ENCODE measurements at regions of chr11 and their contacts with region 1.

Region 1: DNA sequence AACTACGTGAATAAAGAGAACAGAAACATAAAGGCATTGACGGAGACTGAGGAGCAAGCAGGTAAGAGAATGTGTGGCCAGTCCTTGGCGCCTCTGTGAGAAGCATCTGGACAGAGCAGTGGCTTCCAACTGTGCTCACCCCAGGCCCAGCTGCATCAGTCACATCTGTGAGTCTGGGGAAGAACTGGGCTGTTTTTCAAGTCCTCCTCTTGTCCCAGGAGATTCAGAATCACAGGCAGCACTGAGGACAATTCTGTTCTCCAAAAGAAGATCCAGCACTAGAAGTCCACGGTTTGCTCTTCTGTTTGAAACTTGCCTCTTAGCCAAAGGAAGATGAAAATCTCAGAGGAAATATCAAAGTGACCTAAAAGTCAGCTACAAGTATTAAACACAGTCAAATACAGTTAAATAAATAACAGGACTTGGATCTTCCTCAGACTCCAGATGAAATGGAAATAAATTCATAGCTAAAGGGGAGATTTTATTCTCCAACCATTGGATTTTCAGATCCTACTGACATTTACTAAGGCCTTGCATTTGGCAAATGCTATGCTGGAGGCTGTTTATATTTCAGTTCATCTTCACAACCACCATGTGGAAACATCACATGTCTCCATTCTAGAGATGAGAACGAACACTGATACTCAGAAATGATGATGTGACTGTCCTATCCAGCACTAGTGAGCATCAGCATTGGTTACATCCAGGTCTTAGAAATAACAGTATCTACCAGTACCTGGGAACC is 14.1 kb downstream of the FAM181B start:
- DNase-seq: no peak
- ATAC-seq: no peak
- H3K4me3 ChIP-seq: no peak overlapping the region
- H3K27ac ChIP-seq: no peak overlapping the region
- H3K4me1 ChIP-seq: no peaks in the 10 kb centered on the region
- H3K27me3 ChIP-seq: no peaks in the 10 kb centered on the region
- CTCF ChIP-seq: no peak

Region 2: GRCh38 chr11:82601711-82602110 is 117.8 kb before region 1 on chr11:
- intact Hi-C with region 1: no loop called
- DNase-seq: no peak
- ATAC-seq: no peak
- H3K4me3 ChIP-seq: no peak overlapping the region
- H3K27ac ChIP-seq: no peak overlapping the region
- H3K4me1 ChIP-seq: no peaks in the 10 kb centered on the region
- H3K27me3 ChIP-seq: no peaks in the 10 kb centered on the region
- CTCF ChIP-seq: no peak

Region 3: DNA sequence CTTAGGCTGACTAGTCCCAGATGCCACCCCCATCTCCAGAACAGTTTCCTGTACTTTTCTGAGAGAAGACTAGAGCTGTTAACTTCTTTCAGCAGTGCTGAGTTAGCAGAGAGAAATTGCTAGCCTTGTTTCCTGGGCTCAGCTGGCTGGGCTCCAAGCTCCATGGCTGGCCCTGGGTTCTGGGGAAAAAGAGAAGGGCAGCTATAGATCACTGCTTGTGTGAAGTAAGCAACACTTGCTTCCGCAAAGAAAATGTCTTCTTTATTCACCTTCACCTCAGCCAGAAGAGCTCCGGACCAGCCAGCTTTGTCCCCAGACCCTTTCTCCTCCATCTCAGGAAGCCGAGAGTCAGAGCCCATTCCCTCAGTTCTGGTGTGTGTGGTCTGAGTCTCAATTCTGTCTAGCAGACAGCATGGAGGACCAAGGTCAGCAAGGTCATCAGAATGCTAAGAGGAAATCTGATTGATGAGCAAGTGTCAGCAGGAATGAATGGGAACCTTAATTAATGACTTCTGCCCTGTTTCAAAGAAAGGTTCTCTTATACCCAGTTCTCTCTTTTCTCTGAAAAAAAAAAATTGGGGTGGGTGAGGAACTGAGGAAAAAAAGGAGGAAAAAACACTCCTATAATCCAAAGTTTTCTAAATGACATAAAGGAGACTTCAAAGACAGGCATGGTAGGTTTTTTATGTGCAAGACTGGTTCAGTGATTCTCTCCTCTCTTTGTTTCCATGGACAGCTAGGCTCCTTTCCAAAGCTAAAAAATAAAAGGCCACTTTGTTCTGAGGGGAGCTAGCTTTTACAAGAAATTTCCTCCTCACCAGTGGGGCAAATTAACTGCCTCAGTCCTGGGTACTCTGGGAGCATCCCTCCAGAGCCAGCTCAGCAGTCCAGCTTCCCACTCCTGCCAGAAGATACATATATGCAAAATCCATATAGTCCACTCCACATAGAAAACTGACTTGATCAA is 77.7 kb after region 1 on chr11:
- intact Hi-C with region 1: no loop called
- DNase-seq: no peak
- ATAC-seq: peak in 2 of 4 donors; percentile 36 to 66
- H3K4me3 ChIP-seq: no peak overlapping the region
- H3K27ac ChIP-seq: no peak overlapping the region
- H3K4me1 ChIP-seq: no peaks in the 10 kb centered on the region
- H3K27me3 ChIP-seq: no peaks in the 10 kb centered on the region
- CTCF ChIP-seq: no peak

Region 4: DNA sequence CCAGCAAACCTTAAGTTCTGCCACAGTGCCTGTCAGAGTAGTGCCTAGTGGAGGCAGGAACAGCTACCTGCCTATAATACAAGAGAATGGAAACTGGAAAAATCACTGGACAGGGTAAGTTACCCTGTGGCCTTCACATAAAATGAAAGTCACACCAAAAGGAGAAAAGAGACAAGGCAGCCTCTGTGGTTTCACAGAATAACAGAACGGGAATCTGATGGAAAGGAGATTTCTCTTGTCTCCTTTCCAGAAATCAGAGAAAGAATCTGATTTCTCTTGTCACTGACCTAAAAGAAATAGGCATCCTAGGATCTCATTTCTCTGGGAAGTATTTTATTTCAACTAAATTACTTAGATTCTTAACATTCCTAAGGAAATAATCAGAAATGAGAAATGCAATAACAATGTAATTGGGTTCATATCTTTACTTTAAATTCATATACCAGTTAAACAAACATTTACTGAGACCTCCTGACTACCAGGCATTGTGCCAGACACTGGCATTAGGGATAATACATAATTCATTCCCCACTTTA is 139.1 kb after region 1 on chr11:
- intact Hi-C with region 1: loop called in 2 of 3 experiments (anchors 10 kb)
- DNase-seq: no peak
- ATAC-seq: no peak
- H3K4me3 ChIP-seq: no peak overlapping the region
- H3K27ac ChIP-seq: no peak overlapping the region
- H3K4me1 ChIP-seq: no peaks in the 10 kb centered on the region
- H3K27me3 ChIP-seq: no peaks in the 10 kb centered on the region
- CTCF ChIP-seq: no peak

Region 5: DNA sequence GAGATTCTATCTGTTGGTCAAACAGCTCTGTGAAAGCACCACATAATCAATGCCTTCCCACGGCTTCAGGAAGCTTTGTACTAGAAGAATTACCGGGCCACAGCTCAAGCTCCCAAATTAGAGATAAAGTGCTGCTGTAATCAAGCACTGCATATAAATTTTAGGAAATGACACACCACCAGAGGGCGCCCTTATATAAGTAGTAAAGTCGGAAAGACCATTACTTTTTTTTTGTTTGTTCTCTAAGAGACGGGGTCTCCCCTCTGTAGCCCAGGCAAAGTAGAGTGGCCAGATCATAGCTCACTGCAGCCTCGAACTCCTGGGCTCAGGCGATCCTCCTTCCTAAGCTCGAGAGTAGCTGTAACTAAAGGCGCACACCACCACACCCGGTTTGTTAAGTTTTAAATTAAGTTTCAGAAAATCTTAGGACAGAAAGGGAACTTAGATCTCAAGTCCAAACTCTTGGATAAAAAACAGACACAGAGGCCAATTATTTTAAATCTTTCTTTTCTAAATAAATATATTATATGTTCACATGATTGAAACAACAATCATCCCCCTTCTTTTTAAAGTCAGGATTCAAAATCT is 148.1 kb after region 1 on chr11:
- intact Hi-C with region 1: loop called in 1 of 3 experiments (anchors 10 kb)
- DNase-seq: peak in 5 of 6 donors; percentile 43 to 74 (median 67)
- ATAC-seq: peak; percentile 42 to 75 (median 72)
- H3K4me3 ChIP-seq: peak overlapping the region in 1 of 4 donors; percentile 6
- H3K27ac ChIP-seq: no peak overlapping the region
- H3K4me1 ChIP-seq: peaks cover 0 to 7% (median 4%) of the 10 kb centered on the region in 3 donors
- H3K27me3 ChIP-seq: no peaks in the 10 kb centered on the region
- CTCF ChIP-seq: peak; percentile 53 to 65 (median 60)

Region 6: GRCh38 chr11:83671289-83671688 is 951.8 kb after region 1 on chr11:
- intact Hi-C with region 1: no loop called
- DNase-seq: no peak
- ATAC-seq: no peak
- H3K4me3 ChIP-seq: no peak overlapping the region
- H3K27ac ChIP-seq: no peak overlapping the region
- H3K4me1 ChIP-seq: no peaks in the 10 kb centered on the region
- H3K27me3 ChIP-seq: no peaks in the 10 kb centered on the region
- CTCF ChIP-seq: no peak